ENCODE measurements at regions of chr19 and their contacts with region 1.

Region 1: DNA sequence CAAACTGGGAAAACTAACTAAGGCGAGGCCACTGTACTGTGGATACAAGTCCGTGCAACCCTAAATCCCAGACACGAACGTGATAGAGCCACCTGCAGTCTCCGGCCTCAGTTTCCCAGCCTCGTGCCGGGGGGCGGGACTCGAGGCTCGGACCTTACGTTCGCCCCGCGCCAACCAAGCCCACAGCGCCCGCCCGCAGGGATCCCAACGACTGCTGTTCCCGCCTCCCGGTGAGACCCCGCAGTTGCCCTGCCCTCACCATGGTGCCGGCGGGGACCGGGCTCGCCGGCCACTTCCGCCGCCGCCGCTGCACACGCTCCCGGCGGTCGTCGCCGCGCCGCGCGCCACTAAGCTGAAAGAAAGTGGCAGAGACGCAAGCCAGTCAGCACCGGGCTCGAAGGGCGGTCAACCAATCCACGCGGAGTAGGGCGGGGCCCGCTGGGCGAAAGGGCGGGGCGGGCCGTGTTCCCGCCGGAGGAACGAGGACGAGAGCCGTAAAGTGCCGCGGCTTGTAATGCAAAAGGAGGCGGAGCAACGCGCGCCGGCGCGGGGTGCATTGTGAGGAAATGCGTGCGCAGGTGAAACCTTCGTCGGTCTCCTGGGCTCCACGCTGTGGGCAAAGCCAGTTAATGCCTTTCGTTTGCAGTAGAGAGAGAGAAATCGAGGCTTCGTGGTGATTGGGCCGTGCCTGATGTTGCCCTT is at the start of gene LSM4:
- DNase-seq: peak; percentile 99
- ATAC-seq: peak; percentile 96
- total RNA-seq, gene LSM4: 98.0 TPM

Region 2: GRCh38 chr19:18203863-18204393 is 119.0 kb before region 1 on chr19 and contains the start of gene RAB3A:
- intact Hi-C with region 1: loop called (anchors 10 kb)
- DNase-seq: peak; percentile 100
- ATAC-seq: peak; percentile 91
- total RNA-seq, gene RAB3A: 35.5 TPM

Region 3: DNA sequence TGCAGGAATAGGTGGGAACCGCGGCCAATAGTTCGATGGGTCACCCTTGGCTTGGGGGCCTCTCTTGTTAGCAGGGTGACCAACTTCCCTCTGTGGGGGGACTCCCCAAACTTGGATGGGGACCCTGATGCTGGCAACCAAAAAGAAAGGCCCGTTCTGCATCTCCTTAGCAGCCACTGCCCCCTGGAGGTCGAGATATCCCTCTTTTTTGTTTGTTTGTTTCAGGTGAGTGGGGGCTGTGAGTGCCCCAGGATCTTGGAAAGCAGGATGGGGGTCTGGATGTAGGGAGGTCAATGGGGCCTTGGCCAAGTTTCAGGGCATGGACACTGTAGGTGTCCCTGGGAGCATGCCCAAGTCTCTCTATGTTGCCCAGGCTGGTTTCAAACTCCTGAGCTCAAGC is 352.9 kb after region 1 on chr19:
- intact Hi-C with region 1: no loop called
- DNase-seq: no peak
- ATAC-seq: no peak